HepG2 (cell line): ENCODE measurements at regions of chrX and their contacts with region 1.

Region 1: GRCh38 chrX:1453951-1454785 is 1.5 kb upstream of the ASMTL start:
- DNase-seq: peak; percentile 70
- ATAC-seq: peak; percentile 78
- H3K4me3 ChIP-seq: peak overlapping the region; percentile 74 to 84 (median 79); a peak in 3 of 6 replicates
- H3K27ac ChIP-seq: no peak overlapping the region
- H3K4me1 ChIP-seq: peaks cover 12% of the 10 kb centered on the region
- H3K27me3 ChIP-seq: peaks cover 1 to 9% of the 10 kb centered on the region in 2 experiments; a peak in 3 of 5 replicates
- CTCF ChIP-seq: peak; percentile 94
- EP300 ChIP-seq: no peak
- POLR2A ChIP-seq: no peak
- RAD21 ChIP-seq: peak; percentile 94

Region 2: DNA sequence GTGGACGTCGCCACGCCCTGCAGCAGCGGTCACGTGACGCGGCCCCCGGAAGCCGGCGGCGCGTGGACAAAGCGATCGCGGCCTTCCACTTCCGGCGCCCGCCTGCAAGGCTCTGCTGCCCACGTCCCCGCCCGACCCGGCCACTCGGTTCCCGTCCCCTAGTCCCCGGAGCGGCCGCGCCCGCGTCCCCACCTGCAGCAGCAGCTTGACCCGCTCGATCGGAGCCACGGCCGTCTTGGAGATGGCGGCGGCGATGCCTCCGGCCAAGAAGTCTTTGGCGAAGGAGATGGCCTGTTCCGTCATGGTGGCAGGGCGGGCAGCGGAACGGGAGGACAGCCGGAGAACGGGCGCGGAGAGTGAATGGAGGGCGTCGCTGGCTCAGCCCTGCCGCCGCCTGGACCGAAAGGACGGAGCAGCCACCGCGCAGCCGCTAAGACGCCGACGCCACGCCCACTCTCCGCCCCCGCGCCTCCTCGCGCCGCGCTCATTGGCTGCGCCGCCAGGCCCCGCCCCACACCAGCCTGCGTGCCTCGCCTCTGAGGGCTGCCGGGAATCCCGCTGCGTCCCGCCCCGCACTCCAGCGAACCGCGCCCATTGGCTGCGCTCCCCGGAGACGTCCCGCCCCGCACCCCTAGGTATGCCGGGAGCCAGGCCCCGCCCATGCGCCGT is 62.3 kb before region 1 on chrX and contains the start of gene SLC25A6:
- CTCF ChIA-PET with region 1: no interaction called
- POLR2A ChIA-PET with region 1: no interaction called
- in situ Hi-C with region 1: no loop called
- intact Hi-C with region 1: loop called (anchors 5 kb)
- DNase-seq: peak; percentile 92
- ATAC-seq: peak; percentile 94
- H3K4me3 ChIP-seq: peak within 1 kb of the TSS; percentile 94 to 100 (median 96)
- H3K27ac ChIP-seq: peak within 1 kb of the TSS; percentile 99
- H3K4me1 ChIP-seq: peaks cover 50% of the 10 kb centered on the region
- H3K27me3 ChIP-seq: no peaks in the 10 kb centered on the region; a peak in 1 of 5 replicates
- CTCF ChIP-seq: peak; percentile 25; the same call in 1 of the 2 replicates
- EP300 ChIP-seq: 0 out of 4 replicates have a peak, but pooled peaks of 1 of the 2 experiments have one; percentile 13
- POLR2A ChIP-seq: peak in 1 of 2 experiments; percentile 91; a peak in 2 of 4 replicates
- RAD21 ChIP-seq: peak; percentile 67; the same call in 1 of the 2 replicates
- total RNA-seq, gene SLC25A6: 138 and 149 TPM in 2 replicates

Region 3: GRCh38 chrX:1411291-1411720 is 42.9 kb before region 1 on chrX:
- CTCF ChIA-PET with region 1: no interaction called
- POLR2A ChIA-PET with region 1: no interaction called
- in situ Hi-C with region 1: no loop called
- intact Hi-C with region 1: no loop called
- DNase-seq: no peak
- ATAC-seq: no peak
- H3K4me3 ChIP-seq: no peak overlapping the region
- H3K27ac ChIP-seq: no peak overlapping the region
- H3K4me1 ChIP-seq: no peaks in the 10 kb centered on the region
- H3K27me3 ChIP-seq: no peaks in the 10 kb centered on the region
- CTCF ChIP-seq: no peak
- EP300 ChIP-seq: no peak
- POLR2A ChIP-seq: no peak
- RAD21 ChIP-seq: no peak

Region 4: GRCh38 chrX:1580735-1581531 is 126.8 kb after region 1 on chrX:
- CTCF ChIA-PET with region 1: no interaction called
- POLR2A ChIA-PET with region 1: no interaction called
- in situ Hi-C with region 1: no loop called
- intact Hi-C with region 1: loop called (anchors 1 kb)
- DNase-seq: peak; percentile 52
- ATAC-seq: peak; percentile 80
- H3K4me3 ChIP-seq: no peak overlapping the region
- H3K27ac ChIP-seq: no peak overlapping the region
- H3K4me1 ChIP-seq: peaks cover 8% of the 10 kb centered on the region
- H3K27me3 ChIP-seq: no peaks in the 10 kb centered on the region
- CTCF ChIP-seq: peak; percentile 75
- EP300 ChIP-seq: no peak
- POLR2A ChIP-seq: no peak
- RAD21 ChIP-seq: peak; percentile 58; the same call in 1 of the 2 replicates

Region 5: DNA sequence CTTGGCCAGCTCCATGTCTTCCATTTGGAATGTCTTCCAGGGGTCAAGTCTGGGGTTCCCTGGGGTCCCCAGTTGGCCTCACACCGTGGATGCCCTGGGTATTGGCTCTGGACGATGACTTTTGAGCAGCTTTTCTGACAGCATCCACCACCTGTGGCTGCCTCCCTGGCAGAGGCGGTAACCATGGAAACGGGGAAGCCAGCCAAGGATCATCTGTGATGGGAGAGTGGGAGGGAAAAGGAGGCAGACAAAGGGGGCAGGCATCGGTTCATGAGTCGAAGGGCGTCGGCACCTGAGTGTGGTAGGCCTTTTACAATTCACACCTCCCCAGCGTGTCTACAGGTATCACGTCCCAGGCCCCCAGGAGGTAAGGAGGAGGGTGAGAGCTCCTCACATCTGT is 312.9 kb after region 1 on chrX:
- CTCF ChIA-PET with region 1: no interaction called
- POLR2A ChIA-PET with region 1: no interaction called
- in situ Hi-C with region 1: no loop called
- intact Hi-C with region 1: no loop called
- DNase-seq: no peak
- ATAC-seq: no peak
- H3K4me3 ChIP-seq: no peak overlapping the region
- H3K27ac ChIP-seq: no peak overlapping the region
- H3K4me1 ChIP-seq: no peaks in the 10 kb centered on the region
- H3K27me3 ChIP-seq: peaks cover 0 to 2% of the 10 kb centered on the region in 2 experiments; a peak in 1 of 5 replicates
- CTCF ChIP-seq: no peak
- EP300 ChIP-seq: no peak
- POLR2A ChIP-seq: no peak
- RAD21 ChIP-seq: no peak

Region 6: GRCh38 chrX:1851527-1851926 is 397.4 kb after region 1 on chrX:
- CTCF ChIA-PET with region 1: no interaction called
- POLR2A ChIA-PET with region 1: no interaction called
- in situ Hi-C with region 1: no loop called
- intact Hi-C with region 1: no loop called
- DNase-seq: no peak
- ATAC-seq: no peak
- H3K4me3 ChIP-seq: no peak overlapping the region
- H3K27ac ChIP-seq: no peak overlapping the region
- H3K4me1 ChIP-seq: no peaks in the 10 kb centered on the region
- H3K27me3 ChIP-seq: no peaks in the 10 kb centered on the region
- CTCF ChIP-seq: no peak
- EP300 ChIP-seq: no peak
- POLR2A ChIP-seq: no peak
- RAD21 ChIP-seq: no peak

Region 7: GRCh38 chrX:2608638-2609430 is 1154.7 kb after region 1 on chrX:
- CTCF ChIA-PET with region 1: no interaction called
- POLR2A ChIA-PET with region 1: no interaction called
- in situ Hi-C with region 1: loop called (anchors 25 kb)
- intact Hi-C with region 1: no loop called
- DNase-seq: peak; percentile 72
- ATAC-seq: peak; percentile 95
- H3K4me3 ChIP-seq: peak overlapping the region; percentile 64 to 99 (median 83)
- H3K27ac ChIP-seq: peak overlapping the region; percentile 92
- H3K4me1 ChIP-seq: peaks cover 32% of the 10 kb centered on the region
- H3K27me3 ChIP-seq: no peaks in the 10 kb centered on the region; a peak in 1 of 5 replicates
- CTCF ChIP-seq: peak; percentile 3
- EP300 ChIP-seq: no peak; a peak in 1 of 4 replicates
- POLR2A ChIP-seq: peak in 1 of 2 experiments; percentile 62; a peak in 2 of 4 replicates
- RAD21 ChIP-seq: no peak